ENCODE measurements at regions of chr16 and their contacts with region 1.

Region 1: DNA sequence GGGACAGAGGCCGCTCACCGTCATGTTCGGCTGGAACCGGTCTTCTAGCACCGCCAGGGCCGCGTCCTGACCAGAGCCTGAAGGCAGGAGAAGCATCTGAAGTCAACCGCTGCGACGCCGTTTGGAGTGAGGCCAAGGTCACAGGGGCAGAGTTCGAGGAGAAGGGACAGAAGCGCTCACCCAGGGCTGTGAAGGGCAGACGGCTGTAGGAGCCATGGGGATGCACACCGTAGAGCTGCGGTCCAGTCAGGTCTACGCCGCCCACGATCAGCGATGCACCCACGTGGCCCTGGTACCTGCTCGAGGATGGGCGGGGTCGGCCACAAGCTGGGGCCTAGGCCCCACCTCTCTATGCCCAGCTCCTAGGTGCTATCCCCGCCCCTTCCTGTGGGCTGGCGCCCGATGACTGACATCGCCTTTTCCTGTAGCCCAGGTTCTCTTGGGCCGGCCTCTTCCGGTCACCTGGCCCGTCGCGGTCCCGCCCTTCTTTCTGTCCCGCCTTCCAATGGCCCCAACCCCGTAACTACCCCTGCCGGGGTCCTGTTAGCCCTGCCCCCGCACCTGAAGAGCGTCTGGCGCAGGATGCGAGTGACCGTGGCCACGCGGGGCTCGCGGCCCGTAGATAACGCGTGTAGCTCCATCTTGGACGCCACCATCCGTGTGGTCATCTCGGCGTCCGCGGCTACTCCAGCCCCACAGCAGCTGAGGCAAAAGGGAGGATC is 1.1 kb downstream of the PSMB10 start:
- DNase-seq: peak; percentile 92 to 99 (median 98)
- ATAC-seq: peak; percentile 84 to 93 (median 86)
- H3K4me3 ChIP-seq: peak overlapping the region; percentile 80 to 94 (median 91)
- H3K27ac ChIP-seq: peak overlapping the region; percentile 81 to 95 (median 87)
- H3K4me1 ChIP-seq: peaks cover 0 to 20% (median 4%) of the 10 kb centered on the region in 3 donors
- H3K27me3 ChIP-seq: no peaks in the 10 kb centered on the region
- CTCF ChIP-seq: no peak

Region 2: GRCh38 chr16:67521095-67521804 is 414.3 kb before region 1 on chr16:
- intact Hi-C with region 1: loop called in 1 of 3 experiments (anchors 10 kb)
- DNase-seq: peak; percentile 89 to 98 (median 96)
- ATAC-seq: peak; percentile 95 to 98 (median 96)
- H3K4me3 ChIP-seq: peak overlapping the region in 3 of 4 donors; percentile 13 to 38 (median 33)
- H3K27ac ChIP-seq: peak overlapping the region; percentile 63 to 90 (median 72)
- H3K4me1 ChIP-seq: no peaks in the 10 kb centered on the region
- H3K27me3 ChIP-seq: no peaks in the 10 kb centered on the region
- CTCF ChIP-seq: peak; percentile 59 to 74 (median 70)

Region 3: DNA sequence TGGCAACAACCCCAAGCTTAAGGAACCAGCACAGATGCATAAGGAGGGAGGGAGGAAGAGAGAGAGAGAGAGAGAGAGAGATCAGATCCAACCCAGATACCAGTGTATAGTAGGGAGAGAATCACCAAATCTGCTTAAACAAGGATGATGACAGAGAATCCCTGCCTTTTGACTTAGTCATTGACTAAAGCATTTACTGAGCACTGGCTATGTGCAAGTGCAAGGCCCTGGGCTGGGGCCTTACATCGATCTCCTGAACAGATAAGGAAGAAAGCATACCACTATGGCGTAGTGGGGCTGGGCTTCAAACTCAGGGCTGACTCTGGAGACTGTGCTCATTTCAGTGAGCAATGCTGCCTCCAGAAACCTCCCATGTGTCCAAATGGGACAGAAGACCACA is 113.1 kb before region 1 on chr16:
- intact Hi-C with region 1: loop called in 1 of 3 experiments (anchors 5 kb)
- DNase-seq: no peak
- ATAC-seq: no peak
- H3K4me3 ChIP-seq: no peak overlapping the region
- H3K27ac ChIP-seq: no peak overlapping the region
- H3K4me1 ChIP-seq: no peaks in the 10 kb centered on the region
- H3K27me3 ChIP-seq: no peaks in the 10 kb centered on the region
- CTCF ChIP-seq: no peak

Region 4: GRCh38 chr16:67833418-67834241 is 101.9 kb before region 1 on chr16:
- intact Hi-C with region 1: no loop called
- DNase-seq: peak; percentile 85 to 95 (median 92)
- ATAC-seq: peak; percentile 99 to 100 (median 100)
- H3K4me3 ChIP-seq: peak overlapping the region; percentile 65 to 74 (median 70)
- H3K27ac ChIP-seq: no peak overlapping the region
- H3K4me1 ChIP-seq: peaks cover 0 to 7% (median 5%) of the 10 kb centered on the region in 3 donors
- H3K27me3 ChIP-seq: no peaks in the 10 kb centered on the region
- CTCF ChIP-seq: no peak

Region 5: GRCh38 chr16:67883872-67884261 is 51.7 kb before region 1 on chr16:
- intact Hi-C with region 1: loop called in 1 of 3 experiments (anchors 5 kb)
- DNase-seq: peak in 5 of 6 donors; percentile 50 to 90 (median 70)
- ATAC-seq: peak; percentile 80 to 86 (median 84)
- H3K4me3 ChIP-seq: no peak overlapping the region
- H3K27ac ChIP-seq: no peak overlapping the region
- H3K4me1 ChIP-seq: no peaks in the 10 kb centered on the region
- H3K27me3 ChIP-seq: no peaks in the 10 kb centered on the region
- CTCF ChIP-seq: peak; percentile 69 to 81 (median 78)

Region 6: GRCh38 chr16:67897231-67897630 is 38.3 kb before region 1 on chr16:
- intact Hi-C with region 1: loop called in 1 of 3 experiments (anchors 5 kb)
- DNase-seq: no peak
- ATAC-seq: no peak
- H3K4me3 ChIP-seq: no peak overlapping the region
- H3K27ac ChIP-seq: no peak overlapping the region
- H3K4me1 ChIP-seq: peaks cover 11 to 19% (median 11%) of the 10 kb centered on the region in 3 donors
- H3K27me3 ChIP-seq: no peaks in the 10 kb centered on the region
- CTCF ChIP-seq: no peak

Region 7: DNA sequence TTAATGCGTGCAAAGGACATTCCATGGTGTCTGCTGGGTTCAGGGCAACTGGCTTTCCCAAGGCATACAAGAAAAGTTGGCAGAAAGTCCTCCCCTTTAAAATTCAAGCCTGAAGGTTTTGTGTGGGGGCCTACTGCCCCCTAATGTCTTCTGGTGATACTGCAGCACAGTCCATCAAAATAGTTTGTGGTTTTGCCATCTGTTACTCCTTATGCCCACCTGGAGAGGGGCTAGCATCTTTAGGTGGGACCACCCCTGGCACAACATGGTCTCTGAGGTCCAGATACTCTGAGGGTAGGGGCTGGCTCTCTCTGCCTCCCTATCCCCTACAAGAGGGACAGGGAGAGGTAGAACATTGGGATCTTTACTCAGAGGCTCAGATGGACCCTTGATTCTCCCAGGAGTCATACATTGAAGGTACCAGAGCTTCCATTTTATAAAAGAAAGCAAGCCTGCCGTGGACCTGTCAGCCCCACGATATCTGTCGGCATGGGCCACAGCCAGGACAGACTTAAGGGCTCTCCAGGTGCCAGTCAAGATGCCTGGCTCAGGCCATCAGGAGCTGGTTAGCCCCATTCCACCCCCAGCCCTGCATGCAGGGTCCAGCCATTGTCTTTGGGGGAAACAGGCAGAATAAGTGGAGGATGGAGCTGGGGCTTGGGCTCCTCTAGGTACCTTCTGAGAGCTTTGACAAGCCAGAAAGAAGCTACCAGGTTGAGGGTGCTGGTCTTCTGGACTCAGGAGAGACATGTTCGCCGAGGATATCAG is 294.1 kb after region 1 on chr16:
- intact Hi-C with region 1: no loop called
- DNase-seq: peak in 4 of 6 donors; percentile 28 to 66 (median 55)
- ATAC-seq: peak in 3 of 4 donors; percentile 32 to 50 (median 43)
- H3K4me3 ChIP-seq: no peak overlapping the region
- H3K27ac ChIP-seq: peak overlapping the region in 1 of 4 donors; percentile 11
- H3K4me1 ChIP-seq: peaks cover 27 to 36% (median 29%) of the 10 kb centered on the region in 3 donors
- H3K27me3 ChIP-seq: no peaks in the 10 kb centered on the region
- CTCF ChIP-seq: peak; percentile 64 to 80 (median 79)

Measured in pancreas (tissue), 10 donors.